ENCODE measurements at regions of chr11 and their contacts with region 1.

Region 1: GRCh38 chr11:14789879-14790484 is 102.0 kb downstream of the CYP2R1 start:
- DNase-seq: no peak
- ATAC-seq: no peak
- H3K4me3 ChIP-seq: no peak overlapping the region
- H3K27ac ChIP-seq: no peak overlapping the region
- H3K4me1 ChIP-seq: no peaks in the 10 kb centered on the region
- H3K27me3 ChIP-seq: no peaks in the 10 kb centered on the region
- CTCF ChIP-seq: peak; percentile 28
- EP300 ChIP-seq: no peak
- POLR2A ChIP-seq: no peak
- RAD21 ChIP-seq: no peak

Region 2: GRCh38 chr11:15006139-15006759 is 216.3 kb after region 1 on chr11:
- CTCF ChIA-PET with region 1: no interaction called
- POLR2A ChIA-PET with region 1: no interaction called
- in situ Hi-C with region 1: no loop called
- intact Hi-C with region 1: loop called (anchors 10 kb)
- DNase-seq: peak; percentile 46
- ATAC-seq: peak; percentile 83
- H3K4me3 ChIP-seq: no peak overlapping the region
- H3K27ac ChIP-seq: no peak overlapping the region
- H3K4me1 ChIP-seq: no peaks in the 10 kb centered on the region
- H3K27me3 ChIP-seq: no peaks in the 10 kb centered on the region
- CTCF ChIP-seq: peak; percentile 65
- EP300 ChIP-seq: no peak
- POLR2A ChIP-seq: no peak
- RAD21 ChIP-seq: no peak